Tibial artery (tissue), 4 donors: ENCODE measurements at regions of chr19 and their contacts with region 1.

Region 1: DNA sequence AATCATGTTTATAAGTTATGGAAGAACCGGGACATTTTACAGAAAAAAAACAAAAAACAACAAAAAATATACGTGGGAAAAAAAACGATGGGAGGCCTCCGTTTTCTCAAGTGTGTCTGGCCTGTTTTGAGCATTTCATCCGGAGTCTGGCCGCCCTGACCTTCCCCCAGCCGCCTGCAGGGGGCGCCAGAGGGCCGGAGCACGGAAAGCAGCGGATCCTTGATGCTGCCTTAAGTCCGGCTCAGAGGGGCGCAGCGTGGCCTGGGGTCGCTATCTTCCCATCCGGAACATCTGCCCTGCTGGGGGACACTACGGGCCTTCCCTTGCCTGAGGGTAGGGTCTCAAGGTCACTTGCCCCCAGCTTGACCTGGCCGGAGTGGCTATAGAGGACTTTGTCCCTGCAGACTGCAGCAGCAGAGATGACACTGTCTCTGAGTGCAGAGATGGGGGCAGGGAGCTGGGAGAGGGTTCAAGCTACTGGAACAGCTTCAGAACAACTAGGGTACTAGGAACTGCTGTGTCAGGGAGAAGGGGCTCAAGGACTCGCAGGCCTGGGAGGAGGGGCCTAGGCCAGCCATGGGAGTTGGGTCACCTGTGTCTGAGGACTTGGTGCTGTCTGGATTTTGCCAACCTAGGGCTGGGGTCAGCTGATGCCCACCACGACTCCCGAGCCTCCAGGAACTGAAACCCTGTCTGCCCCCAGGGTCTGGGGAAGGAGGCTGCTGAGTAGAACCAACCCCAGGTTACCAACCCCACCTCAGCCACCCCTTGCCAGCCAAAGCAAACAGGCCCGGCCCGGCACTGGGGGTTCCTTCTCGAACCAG is 1.8 kb upstream of the APOE start:
- DNase-seq: peak; percentile 64 to 81
- H3K4me3 ChIP-seq: no peak overlapping the region
- H3K27ac ChIP-seq: no peak overlapping the region
- H3K4me1 ChIP-seq: peaks cover 0 to 18% (median 0%) of the 10 kb centered on the region in 4 donors
- H3K27me3 ChIP-seq: peaks cover 0 to 45% of the 10 kb centered on the region in 2 donors
- CTCF ChIP-seq: peak; percentile 92 to 99

Region 2: GRCh38 chr19:44954824-44955586 is 51.2 kb after region 1 on chr19 and contains the start of gene CLPTM1:
- intact Hi-C with region 1: loop called (anchors 5 kb)
- DNase-seq: peak; percentile 95 to 98
- H3K4me3 ChIP-seq: peak within 1 kb of the TSS; percentile 94 to 99
- H3K27ac ChIP-seq: peak within 1 kb of the TSS; percentile 87 to 95
- H3K4me1 ChIP-seq: peaks cover 0 to 72% (median 44%) of the 10 kb centered on the region in 4 donors
- H3K27me3 ChIP-seq: peaks cover 0 to 4% of the 10 kb centered on the region in 2 donors
- CTCF ChIP-seq: peak in 1 of 2 experiments; percentile 28

Region 3: DNA sequence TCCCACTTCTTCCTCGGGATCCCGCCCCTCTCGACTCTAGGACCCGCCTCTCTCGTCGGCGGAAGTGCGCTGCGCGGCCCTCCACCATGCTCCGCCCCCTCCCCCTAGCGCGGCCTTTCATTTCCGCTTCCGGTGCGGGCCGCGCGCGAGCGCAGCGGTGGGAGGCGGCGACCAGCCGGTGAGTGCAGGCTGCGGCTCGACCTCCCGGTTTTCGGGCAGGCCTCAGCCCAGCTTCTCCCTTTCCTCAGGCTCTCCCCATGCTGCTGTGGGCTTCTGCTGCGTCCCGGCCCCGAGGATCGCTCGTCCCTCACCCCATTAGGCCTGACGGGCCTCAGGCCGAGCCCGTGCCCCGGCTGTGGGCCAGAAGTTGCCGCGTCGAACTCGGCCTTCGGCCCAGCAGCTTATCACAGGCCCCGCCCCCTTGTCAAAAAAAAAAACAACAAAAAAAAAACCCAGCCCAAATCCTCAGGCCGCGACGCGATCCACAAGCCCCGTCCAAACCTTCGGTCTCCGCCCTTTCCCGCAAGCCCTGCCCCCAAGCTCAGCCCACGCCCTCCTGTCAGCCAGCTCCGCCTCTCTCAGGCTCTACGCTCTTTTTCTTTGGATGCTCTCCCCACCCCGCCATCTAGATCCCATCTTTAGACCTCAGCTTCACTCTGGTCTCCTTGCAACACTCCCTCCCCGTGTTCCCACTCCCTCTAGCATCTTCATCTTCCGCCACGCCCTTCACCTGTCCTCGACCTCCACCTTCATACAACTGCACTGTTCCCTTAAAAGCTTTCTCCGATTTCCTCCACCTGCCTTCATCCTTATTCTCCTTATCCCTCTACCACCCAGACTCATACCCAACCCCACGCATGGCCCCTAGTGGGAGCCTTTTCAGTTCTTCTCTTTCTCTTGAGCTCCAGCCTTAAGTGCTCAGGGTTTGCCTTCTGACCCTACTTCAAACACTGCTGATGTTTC is 135.4 kb after region 1 on chr19 and contains the start of gene CLASRP:
- intact Hi-C with region 1: no loop called
- DNase-seq: peak; percentile 88 to 95
- H3K4me3 ChIP-seq: peak within 1 kb of the TSS; percentile 66 to 85
- H3K27ac ChIP-seq: peak within 1 kb of the TSS; percentile 73 to 92
- H3K4me1 ChIP-seq: peaks cover 0 to 38% (median 30%) of the 10 kb centered on the region in 4 donors
- H3K27me3 ChIP-seq: no peaks in the 10 kb centered on the region
- CTCF ChIP-seq: no peak

Region 4: DNA sequence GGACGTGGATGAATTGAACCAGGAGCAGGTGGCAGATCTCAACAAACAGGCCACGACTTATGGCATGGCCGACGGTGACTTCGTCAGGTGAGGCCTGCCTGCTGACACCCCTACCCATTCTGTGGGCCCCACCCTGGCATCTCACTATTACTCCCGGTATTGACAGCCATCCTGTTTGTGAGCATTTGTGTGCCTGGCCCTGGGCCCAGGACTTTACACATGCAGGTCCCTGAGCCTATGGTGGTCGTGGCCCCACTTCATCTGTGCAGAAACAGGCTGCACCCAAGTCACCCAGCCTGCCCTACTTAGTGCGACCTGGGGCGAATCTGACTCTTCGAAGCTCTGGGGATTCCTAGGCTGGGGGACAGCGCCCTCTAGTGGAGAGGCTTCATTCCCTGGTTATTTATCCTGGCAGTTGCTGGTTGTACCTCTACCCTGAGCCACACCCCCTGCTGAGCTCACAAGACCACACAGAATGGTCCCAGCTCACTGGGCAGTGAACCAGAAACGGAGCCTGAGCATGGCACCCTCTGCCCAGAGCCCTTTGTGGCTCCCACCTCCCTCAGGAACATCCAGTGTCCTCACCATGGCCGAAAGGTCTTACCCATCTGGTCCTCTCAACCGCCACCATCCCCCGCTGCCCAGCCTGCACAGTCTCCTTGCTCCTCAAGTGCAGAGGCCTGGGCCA is 155.6 kb after region 1 on chr19:
- intact Hi-C with region 1: loop called (anchors 10 kb)
- DNase-seq: peak; percentile 62 to 73
- H3K4me3 ChIP-seq: no peak overlapping the region
- H3K27ac ChIP-seq: no peak overlapping the region
- H3K4me1 ChIP-seq: no peaks in the 10 kb centered on the region
- H3K27me3 ChIP-seq: no peaks in the 10 kb centered on the region
- CTCF ChIP-seq: peak; percentile 71 to 78